ENCODE measurements at regions of chr22 and their contacts with region 1.

Region 1: GRCh38 chr22:39343259-39344048 is 6.3 kb upstream of the SYNGR1 start:
- H3K4me3 ChIP-seq: no peak overlapping the region
- H3K27ac ChIP-seq: no peak overlapping the region
- H3K4me1 ChIP-seq: no peaks in the 10 kb centered on the region
- CTCF ChIP-seq: peak; percentile 63

Region 2: GRCh38 chr22:39332441-39333064 is 10.9 kb before region 1 on chr22:
- CTCF ChIA-PET with region 1: interaction called, 106 read pairs
- POLR2A ChIA-PET with region 1: interaction called, 5 read pairs
- H3K4me3 ChIP-seq: no peak overlapping the region
- H3K27ac ChIP-seq: no peak overlapping the region
- H3K4me1 ChIP-seq: 0 out of 2 replicates have a peak, but pooled peaks cover 2% of the 10 kb centered on the region
- CTCF ChIP-seq: no peak

Region 3: GRCh38 chr22:39364714-39365491 is 21.4 kb after region 1 on chr22:
- CTCF ChIA-PET with region 1: interaction called, 10 read pairs
- POLR2A ChIA-PET with region 1: no interaction called
- H3K4me3 ChIP-seq: no peak overlapping the region
- H3K27ac ChIP-seq: no peak overlapping the region
- H3K4me1 ChIP-seq: no peaks in the 10 kb centered on the region; the same call in 1 of the 2 replicates
- CTCF ChIP-seq: no peak

Region 4: DNA sequence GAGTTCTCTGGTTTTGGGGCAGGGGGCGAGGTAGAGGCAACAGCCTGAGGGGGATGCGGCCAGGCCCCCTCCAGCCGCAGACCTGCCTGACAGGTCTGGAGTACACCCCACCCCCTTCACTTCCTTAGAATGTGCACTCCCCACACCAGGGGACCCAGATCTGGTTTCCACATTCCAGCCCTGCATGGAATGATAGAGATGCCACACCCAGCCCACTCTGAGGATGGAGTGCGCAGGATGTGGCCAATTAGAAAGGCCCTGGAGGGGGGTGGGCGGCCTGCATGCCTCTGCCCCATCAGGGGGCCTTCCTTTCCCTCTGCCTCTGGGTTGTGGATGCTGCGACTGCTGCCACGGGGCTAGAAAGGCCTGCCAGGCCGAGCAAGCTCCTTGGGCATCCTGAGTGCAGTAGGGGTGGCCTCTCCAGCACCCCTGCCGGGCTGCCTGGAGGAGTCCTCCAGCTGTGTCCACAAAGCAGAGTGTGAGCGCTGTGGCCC is 85.2 kb after region 1 on chr22:
- CTCF ChIA-PET with region 1: no interaction called
- POLR2A ChIA-PET with region 1: no interaction called
- H3K4me3 ChIP-seq: no peak overlapping the region
- H3K27ac ChIP-seq: 0 out of 2 replicates have a peak overlapping the region, but pooled peaks have one; percentile 16
- H3K4me1 ChIP-seq: no peaks in the 10 kb centered on the region
- CTCF ChIP-seq: no peak

Region 5: GRCh38 chr22:39574779-39575551 is 231.5 kb after region 1 on chr22:
- CTCF ChIA-PET with region 1: no interaction called
- POLR2A ChIA-PET with region 1: no interaction called
- H3K4me3 ChIP-seq: no peak overlapping the region
- H3K27ac ChIP-seq: no peak overlapping the region
- H3K4me1 ChIP-seq: no peaks in the 10 kb centered on the region
- CTCF ChIP-seq: no peak

Region 6: GRCh38 chr22:39598017-39598965 is 254.8 kb after region 1 on chr22:
- CTCF ChIA-PET with region 1: no interaction called
- POLR2A ChIA-PET with region 1: no interaction called
- H3K4me3 ChIP-seq: no peak overlapping the region
- H3K27ac ChIP-seq: no peak overlapping the region
- H3K4me1 ChIP-seq: no peaks in the 10 kb centered on the region
- CTCF ChIP-seq: no peak